ENCODE measurements at regions of chr6 and their contacts with region 1.

Region 1: DNA sequence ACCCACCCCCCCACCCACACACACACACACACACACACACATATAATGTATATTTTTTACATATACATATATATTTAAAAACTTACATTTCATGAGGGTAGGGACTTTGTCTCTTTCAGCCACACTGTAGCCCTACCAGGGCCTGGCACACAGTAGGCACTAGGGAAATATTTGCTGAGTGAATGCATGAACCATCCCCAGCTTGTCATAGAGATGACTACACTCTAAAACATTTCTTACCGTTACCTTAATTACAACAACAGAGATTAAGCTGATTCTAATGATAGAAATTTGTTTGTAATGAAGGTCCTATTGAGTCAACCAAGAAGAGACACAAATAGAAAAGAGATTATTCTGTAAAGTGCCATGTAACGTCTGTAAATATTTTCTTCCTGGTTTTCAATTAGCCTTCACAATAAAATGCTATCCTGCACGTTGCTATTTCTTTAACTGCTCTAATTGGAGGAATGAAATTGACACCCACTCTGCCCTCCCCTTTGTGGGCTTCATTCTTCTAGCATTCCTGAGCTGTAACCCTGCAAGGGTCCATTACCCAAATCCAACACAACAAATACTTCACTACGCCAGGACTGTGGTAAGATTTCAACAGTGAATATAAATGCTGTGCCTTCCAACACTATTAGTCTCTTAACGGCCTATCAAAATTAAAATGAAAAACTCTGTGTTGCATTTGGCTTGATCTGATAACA is 30.8 kb downstream of the SIM1 start:
- DNase-seq: no peak
- CTCF ChIP-seq: no peak

Region 2: DNA sequence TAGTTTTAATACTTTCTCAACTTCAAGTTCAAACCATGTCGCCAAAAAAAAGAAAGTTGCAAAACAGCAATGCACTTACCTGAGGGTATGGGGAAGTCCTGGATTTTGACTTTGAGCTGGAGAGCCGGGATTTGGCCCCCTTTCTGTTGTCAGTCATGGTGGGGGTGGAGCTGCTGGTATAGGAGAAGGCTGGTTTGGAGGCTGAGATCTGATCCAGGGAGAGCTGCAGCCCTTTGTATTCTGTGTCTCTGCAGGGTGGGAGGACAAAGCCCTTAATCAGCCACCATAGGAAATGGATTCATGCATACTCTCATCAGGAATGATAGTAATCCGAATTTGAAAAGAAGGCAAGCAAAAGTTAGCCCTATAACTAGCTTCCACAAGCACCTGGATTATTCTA is 13.2 kb before region 1 on chr6:
- CTCF ChIA-PET with region 1: interaction called, 10 read pairs
- POLR2A ChIA-PET with region 1: no interaction called
- DNase-seq: no peak
- CTCF ChIP-seq: no peak

Measured in GM10248 (cell line).